ENCODE measurements at regions of chr12 and their contacts with region 1.

Region 1: DNA sequence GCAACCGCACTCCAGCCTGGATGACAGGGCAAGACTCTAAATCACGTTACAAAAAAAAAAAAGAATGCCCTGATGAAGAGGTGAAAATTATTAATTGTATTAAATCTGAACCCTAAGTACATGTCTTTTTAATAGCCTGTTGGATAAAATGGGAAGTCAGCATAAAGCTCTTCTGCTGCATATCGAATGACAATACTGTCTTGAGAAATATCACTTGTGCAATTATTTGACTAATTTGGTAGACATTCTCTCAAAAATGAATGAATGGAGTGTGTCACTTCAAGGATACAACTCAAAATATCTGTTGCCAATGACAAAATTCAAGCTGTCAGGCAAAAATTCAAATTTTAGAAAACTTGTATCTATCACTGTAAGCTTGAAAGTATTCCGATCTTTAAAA is 38.9 kb downstream of the DNAI7 start:
- DNase-seq: no peak
- ATAC-seq: no peak
- H3K4me3 Mint-ChIP-seq: no peak overlapping the region
- H3K27ac Mint-ChIP-seq: no peak overlapping the region
- H3K4me1 Mint-ChIP-seq: peaks cover 0 to 22% (median 3%) of the 10 kb centered on the region in 4 donors
- H3K27me3 Mint-ChIP-seq: no peaks in the 10 kb centered on the region

Region 2: DNA sequence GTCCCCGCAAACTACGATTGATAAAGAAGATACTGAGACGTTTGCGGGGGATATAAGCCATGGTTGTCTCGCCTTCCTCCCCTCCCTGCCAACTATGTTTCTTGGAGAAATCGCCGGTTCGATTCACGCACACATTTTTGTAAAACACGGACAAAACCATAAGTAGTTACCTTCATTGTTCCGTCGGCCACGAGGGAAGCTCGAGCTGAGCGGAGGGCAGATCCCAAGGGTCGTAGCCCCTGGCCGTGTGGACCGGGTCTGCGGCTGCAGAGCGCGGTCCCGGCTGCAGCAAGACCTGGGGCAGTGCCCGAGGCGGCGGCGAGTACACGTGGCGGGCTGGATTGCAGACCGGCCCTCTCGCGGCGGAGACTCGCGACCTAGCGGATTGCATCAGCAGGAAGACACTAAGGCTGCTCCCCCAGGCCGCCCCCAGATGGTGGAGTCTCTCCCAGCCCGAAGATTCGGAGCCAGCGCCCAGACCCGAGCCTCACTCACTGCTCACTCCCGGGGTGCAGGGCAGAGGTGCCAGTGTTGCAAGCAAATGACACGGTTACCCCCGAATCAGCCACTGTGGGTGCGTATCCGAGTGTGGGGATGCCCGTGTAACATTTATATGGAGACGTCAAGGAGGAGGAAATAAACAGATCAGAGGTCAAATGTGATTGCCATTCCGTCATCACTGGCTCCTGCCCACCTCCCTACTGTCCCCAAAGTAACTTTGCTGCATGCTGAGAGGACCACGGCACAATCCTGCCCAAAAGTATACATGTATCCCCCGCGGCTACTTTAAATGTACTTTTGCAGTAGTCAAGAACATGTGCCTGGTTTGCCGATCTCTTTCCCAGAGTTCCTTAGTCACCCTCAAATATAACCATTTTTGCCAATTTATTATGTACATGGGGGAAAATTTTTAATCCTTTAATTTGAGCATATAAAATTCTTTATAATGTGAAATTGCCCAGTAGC is 207.0 kb before region 1 on chr12 and contains the start of gene BCAT1:
- POLR2A ChIA-PET with region 1: no interaction called
- DNase-seq: peak in 5 of 10 donors; percentile 4 to 19 (median 7)
- ATAC-seq: peak; percentile 56 to 68
- H3K4me3 Mint-ChIP-seq: peak within 1 kb of the TSS; percentile 75 to 96 (median 87)
- H3K27ac Mint-ChIP-seq: peak within 1 kb of the TSS in 6 of 10 donors; percentile 21 to 60 (median 42)
- H3K4me1 Mint-ChIP-seq: peaks cover 14 to 46% (median 26%) of the 10 kb centered on the region in 4 donors
- H3K27me3 Mint-ChIP-seq: peaks cover 30 to 68% (median 52%) of the 10 kb centered on the region in 5 donors
- polyA plus RNA-seq, gene BCAT1: not detected

Region 3: DNA sequence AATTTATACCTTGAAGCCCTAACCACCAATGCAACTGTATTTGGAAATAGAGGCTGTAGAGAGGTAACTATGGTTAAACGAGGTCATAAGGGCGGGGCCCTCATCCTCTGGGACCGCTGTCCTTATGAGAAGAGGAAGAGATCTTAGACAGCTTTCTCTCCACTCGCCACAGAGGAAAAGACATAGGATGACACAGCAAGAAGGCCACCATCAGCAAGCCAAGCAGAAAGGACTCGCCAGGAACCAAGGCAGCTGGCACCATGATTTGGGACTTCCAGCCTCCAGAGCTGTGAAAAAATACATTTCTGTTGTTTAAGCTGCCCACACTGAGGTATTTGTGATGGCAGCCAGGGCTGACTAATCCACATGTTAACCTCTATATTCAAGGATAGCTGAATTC is 176.7 kb before region 1 on chr12:
- POLR2A ChIA-PET with region 1: no interaction called
- DNase-seq: no peak
- ATAC-seq: no peak
- H3K4me3 Mint-ChIP-seq: no peak overlapping the region
- H3K27ac Mint-ChIP-seq: no peak overlapping the region
- H3K4me1 Mint-ChIP-seq: peaks cover 0 to 4% (median 0%) of the 10 kb centered on the region in 4 donors
- H3K27me3 Mint-ChIP-seq: peaks cover 0 to 5% (median 3%) of the 10 kb centered on the region in 5 donors

Region 4: DNA sequence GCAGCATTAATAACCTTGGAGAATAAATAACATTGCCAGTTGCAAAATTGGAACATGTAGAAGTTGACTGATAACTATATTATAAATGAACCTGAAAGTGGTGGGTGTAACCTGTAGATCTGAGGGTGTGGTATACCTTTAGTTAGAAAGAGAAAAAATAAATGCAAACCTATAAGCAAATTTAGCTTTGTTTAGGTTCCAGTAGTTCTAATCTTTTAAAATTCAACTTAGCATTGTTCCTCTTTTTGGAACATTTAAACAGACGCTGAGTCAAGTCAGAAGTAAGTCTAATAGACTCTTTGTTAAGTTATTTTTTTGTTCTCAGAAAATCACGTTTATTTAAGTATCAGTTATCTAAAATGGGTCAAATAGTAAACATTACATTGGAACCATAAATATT is 81.1 kb before region 1 on chr12:
- POLR2A ChIA-PET with region 1: no interaction called
- DNase-seq: no peak
- ATAC-seq: no peak
- H3K4me3 Mint-ChIP-seq: no peak overlapping the region
- H3K27ac Mint-ChIP-seq: peak overlapping the region in 1 of 10 donors; percentile 32
- H3K4me1 Mint-ChIP-seq: peaks cover 11 to 48% (median 20%) of the 10 kb centered on the region in 4 donors
- H3K27me3 Mint-ChIP-seq: no peaks in the 10 kb centered on the region

Region 5: DNA sequence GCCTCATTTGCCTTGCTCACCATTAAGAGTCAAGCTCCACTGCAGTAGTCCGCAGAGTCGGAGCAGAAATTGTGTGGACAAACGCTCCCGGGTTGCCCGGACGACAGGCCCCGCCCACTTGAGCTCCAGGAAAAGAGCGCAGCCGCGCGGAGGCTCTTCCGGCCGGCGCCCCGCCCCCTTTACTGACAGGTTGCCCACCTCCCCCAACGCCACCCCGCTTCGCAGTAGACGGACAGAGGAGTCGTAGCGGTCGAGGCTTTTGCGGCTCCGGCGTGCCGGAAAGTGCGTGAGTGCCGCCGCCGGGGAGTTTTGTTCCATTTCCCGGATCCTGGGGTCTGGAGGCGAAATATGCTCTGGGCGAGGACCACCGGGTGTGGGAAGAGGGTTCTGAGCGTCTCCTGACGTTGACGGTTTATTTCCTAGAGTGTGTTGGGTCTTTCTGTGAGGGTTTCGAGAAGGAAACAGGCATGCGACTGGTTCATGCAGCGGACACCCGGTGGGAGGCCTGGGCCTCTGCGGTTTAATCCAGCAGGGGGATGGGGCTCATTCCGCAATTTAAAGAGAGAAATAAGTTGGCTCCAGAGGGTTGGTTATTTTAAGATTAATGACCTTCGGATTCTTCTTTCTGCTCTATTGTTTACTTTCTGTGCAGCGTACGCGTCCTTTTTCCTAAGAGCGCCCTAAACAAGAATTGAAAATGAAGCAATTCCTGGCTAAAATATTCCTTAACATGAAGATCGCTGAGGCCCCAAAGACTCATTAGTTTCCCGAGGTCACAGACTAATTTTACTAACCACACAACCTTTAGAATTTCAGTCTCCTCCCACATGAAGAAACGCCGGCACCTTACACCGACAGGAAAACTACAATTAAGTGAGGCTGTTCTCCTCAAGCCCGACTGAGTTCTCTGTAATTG is 39.3 kb after region 1 on chr12 and contains the starts of genes DNAI7 and ETFRF1:
- POLR2A ChIA-PET with region 1: interaction called, 10 read pairs
- DNase-seq: peak; percentile 94 to 99 (median 96)
- ATAC-seq: peak; percentile 91
- H3K4me3 Mint-ChIP-seq: peak within 1 kb of the TSS; percentile 92 to 99 (median 98)
- H3K27ac Mint-ChIP-seq: peak within 1 kb of the TSS; percentile 97 to 100 (median 100)
- H3K4me1 Mint-ChIP-seq: peaks cover 15 to 41% (median 36%) of the 10 kb centered on the region in 4 donors
- H3K27me3 Mint-ChIP-seq: no peaks in the 10 kb centered on the region
- polyA plus RNA-seq, gene DNAI7: 0.09 to 0.16 TPM in 2 of 3 donors, not detected in the other
- polyA plus RNA-seq, gene ETFRF1: 39.8 to 53.5 (median 40.6) TPM

Region 6: DNA sequence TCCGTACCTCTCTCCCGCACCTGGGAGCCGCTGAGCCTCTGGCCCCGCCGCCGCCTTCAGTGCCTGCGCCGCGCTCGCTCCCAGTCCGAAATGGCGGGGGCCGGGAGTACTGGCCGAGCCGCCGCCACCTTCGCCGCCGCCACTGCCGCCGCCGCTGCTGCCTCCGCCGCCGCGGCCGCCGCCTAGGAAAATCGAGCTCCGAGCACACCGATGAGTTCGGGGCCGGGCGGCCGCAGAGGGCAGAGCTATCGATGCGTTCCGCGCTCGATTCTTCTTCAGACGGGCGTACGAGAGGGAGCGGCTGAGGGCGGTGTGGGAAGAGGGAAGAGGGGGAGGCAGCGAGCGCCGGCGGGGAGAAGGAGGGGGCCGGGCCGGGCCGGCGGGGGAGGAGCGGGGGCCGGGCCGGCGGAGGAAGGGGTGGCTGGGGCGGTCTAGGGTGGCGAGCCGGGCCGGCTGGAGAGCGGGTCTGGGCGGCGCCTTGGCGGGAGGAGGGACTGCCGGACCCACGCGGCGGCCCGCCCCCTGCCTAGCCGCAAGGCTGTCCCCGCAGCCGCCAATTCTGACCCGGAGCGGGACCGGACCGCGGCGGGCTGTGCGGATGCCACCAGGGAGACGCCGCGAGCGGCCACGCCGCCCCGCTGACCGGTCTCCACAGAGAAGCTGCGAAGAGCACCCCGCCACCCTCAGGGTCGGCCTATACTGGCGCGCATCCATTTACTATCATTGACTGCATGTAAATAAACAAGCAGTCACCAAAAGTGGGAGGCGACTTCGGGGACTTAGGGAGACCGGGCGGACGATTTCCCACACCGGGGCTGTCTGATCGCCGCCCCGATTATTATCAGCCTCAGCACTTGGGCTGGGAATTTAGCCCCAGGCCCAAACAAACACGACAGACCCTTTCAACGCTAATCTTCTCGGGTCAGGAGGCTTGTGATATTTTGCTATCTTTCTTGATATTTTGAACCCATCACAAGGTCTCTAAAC is 95.0 kb after region 1 on chr12 and contains the start of gene KRAS:
- POLR2A ChIA-PET with region 1: no interaction called
- DNase-seq: peak; percentile 83 to 95 (median 90)
- ATAC-seq: peak; percentile 84 to 91
- H3K4me3 Mint-ChIP-seq: peak within 1 kb of the TSS; percentile 91 to 98 (median 94)
- H3K27ac Mint-ChIP-seq: peak within 1 kb of the TSS; percentile 88 to 98 (median 96)
- H3K4me1 Mint-ChIP-seq: peaks cover 17 to 47% (median 44%) of the 10 kb centered on the region in 4 donors
- H3K27me3 Mint-ChIP-seq: no peaks in the 10 kb centered on the region
- polyA plus RNA-seq, gene KRAS: 49.3 to 59.5 (median 53.3) TPM